ENCODE measurements at regions of chr2 and their contacts with region 1.

Region 1: DNA sequence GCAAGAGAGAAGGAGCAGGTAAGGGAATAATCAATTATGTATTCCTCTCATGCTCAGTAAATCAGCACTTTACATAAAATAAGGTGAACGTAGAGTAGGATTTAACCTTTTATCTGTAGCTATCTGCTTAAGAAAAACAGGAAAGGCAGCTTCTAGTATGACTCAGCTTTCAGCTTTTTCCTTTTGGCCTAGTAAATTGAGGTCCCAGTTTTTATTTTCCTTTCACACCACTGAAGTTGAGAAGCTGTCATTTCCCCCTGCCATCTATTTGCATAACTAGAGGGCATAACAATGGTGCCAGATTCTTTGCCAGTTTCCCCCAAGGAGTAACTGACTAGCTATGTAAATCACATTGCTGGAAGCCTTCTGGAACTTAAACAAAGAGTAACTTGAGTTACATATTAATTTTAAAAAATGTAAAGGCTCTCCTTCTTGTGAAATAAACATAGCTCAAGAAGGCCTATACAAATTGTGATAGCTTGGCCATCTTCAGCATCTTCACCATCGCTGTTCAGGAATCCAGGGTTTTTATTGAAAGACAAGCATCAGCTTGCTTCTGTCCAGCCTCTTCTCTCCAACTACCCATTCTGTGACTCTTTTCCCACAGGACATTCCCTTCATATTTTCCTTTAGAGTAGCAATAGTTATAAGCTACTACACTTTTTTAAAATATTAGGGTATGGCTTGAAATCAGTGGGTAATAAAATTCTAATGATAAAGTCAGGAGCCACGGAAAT is 97.0 kb downstream of the KYNU start:
- DNase-seq: no peak
- H3K4me3 Mint-ChIP-seq: no peak overlapping the region
- H3K27ac Mint-ChIP-seq: no peak overlapping the region
- H3K4me1 Mint-ChIP-seq: no peaks in the 10 kb centered on the region
- H3K27me3 Mint-ChIP-seq: peaks cover 1% of the 10 kb centered on the region

Region 2: DNA sequence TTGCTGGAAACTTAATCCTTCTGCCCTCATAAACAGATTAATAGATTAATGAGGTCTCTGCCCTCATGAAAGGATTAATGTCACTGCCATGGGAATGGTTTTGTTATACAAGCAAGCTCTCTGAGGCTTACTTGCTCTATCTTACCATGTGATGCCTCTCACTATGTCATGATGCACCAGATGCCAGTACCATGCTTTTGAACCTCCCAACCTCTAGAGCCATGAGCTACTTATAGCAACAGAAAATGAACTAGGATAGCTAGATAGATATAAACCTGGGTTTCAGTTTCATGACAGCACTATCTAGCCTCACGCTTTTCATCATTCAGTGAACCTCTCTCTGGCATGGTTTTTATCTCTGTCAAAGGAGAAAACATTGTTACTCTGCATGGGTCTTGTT is 472.1 kb before region 1 on chr2:
- CTCF ChIA-PET with region 1: no interaction called
- POLR2A ChIA-PET with region 1: no interaction called
- DNase-seq: no peak
- H3K4me3 Mint-ChIP-seq: no peak overlapping the region
- H3K27ac Mint-ChIP-seq: no peak overlapping the region
- H3K4me1 Mint-ChIP-seq: no peaks in the 10 kb centered on the region
- H3K27me3 Mint-ChIP-seq: no peaks in the 10 kb centered on the region

Region 3: GRCh38 chr2:142951190-142952007 is 23.1 kb before region 1 on chr2:
- CTCF ChIA-PET with region 1: no interaction called
- POLR2A ChIA-PET with region 1: no interaction called
- DNase-seq: no peak
- H3K4me3 Mint-ChIP-seq: no peak overlapping the region
- H3K27ac Mint-ChIP-seq: no peak overlapping the region
- H3K4me1 Mint-ChIP-seq: no peaks in the 10 kb centered on the region
- H3K27me3 Mint-ChIP-seq: peaks cover 11% of the 10 kb centered on the region

Region 4: DNA sequence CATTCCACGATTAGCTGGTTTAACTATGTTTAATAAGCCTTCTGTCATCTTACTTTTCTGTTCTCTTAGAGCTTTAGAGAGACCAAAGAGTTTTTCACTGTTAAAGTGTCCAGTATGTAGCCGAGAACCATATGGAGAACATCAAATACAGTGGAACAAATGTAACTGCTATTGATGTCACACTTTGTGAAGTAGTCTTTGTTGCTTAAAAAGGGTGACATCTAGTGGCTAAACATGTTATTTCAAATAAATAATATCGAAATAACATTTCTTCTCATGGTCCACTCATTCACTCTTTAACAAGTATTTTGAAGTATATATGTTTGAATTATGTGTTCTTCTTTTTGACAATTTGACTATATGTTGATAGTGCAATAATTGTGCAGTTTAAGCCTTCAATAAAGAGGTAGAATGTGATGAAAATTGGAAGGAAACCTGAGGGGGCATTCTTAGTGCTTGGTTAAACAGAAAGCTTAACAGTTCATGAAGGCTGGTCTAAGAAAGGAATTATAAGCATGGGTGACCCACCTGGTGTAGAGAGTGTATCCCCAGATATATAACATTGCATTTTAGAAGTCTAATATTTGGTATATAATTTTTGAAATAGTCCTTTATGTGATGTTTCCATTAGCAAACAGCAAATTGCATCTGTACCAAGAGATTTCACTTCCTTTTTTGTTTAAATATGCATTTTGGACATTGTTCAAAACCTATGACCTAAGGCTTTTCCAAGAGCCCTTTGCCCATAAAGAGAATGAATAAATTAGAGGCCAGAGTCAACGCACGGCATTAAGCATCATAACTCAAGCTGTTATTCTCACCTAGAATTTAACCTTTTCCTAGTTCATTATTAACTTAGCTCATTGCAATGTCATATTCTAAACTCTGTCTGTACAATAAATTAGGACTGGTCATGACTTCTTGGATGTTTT is 15.1 kb after region 1 on chr2:
- CTCF ChIA-PET with region 1: interaction called, 10 read pairs
- POLR2A ChIA-PET with region 1: no interaction called
- DNase-seq: no peak
- H3K4me3 Mint-ChIP-seq: no peak overlapping the region
- H3K27ac Mint-ChIP-seq: no peak overlapping the region
- H3K4me1 Mint-ChIP-seq: no peaks in the 10 kb centered on the region
- H3K27me3 Mint-ChIP-seq: peaks cover 20% of the 10 kb centered on the region

Measured in activated CD4-positive, alpha-beta memory T cell treated with anti-CD3 and anti-CD28 coated beads, Interleukin-2, amount 10 ng/mL, durations not matched to agents 7 days and 5 days (primary cell).